ENCODE measurements at regions of chr6 and their contacts with region 1.

Region 1: GRCh38 chr6:158220786-158221442 is 52.8 kb downstream of the GTF2H5 start:
- H3K4me3 Mint-ChIP-seq: no peak overlapping the region
- H3K27ac Mint-ChIP-seq: no peak overlapping the region
- H3K4me1 Mint-ChIP-seq: peaks cover 15% of the 10 kb centered on the region
- H3K27me3 Mint-ChIP-seq: peaks cover 5% of the 10 kb centered on the region

Region 2: DNA sequence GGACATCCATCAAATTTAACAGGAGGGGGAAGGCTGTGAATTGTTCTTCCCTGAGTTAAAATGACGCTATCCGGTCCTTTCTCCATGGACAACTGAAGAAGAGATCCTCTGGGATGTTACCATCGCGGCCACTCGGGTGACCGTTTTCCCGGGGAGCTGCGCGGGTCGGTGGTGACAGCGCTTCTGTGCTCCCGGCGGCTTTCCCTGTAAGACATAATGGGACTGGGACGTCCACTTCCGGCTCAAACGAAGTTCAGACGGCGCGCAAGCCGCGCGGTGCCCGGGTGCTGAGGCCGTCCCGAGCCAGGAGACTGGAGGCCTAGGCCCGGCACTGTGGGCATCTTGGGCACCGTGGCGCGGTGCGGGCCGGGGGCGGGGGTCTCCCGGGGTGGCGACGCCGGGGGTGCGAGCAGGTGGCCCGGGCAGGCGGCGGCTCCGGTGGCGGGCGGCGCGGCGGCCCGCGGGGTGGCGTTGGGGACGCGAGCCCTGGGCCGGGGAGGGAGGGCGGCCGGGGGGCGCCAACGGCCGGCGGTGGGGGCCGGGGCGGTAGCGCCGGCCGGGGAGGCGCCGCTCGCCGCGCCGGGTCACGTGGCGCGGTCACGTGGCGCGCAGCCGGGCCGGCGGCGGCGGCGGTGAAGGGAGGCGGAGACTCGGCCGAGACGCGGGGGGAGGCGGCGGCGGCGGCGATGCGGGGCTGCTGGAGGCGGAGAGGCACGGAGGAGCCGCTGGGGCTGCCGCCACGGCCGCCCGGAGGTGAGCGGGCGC is 10.8 kb after region 1 on chr6:
- intact Hi-C with region 1: no loop called
- H3K4me3 Mint-ChIP-seq: peak overlapping the region; percentile 90
- H3K27ac Mint-ChIP-seq: peak overlapping the region; percentile 91
- H3K4me1 Mint-ChIP-seq: peaks cover 23% of the 10 kb centered on the region
- H3K27me3 Mint-ChIP-seq: peaks cover 15% of the 10 kb centered on the region

Region 3: GRCh38 chr6:158518191-158519127 is 297.5 kb after region 1 on chr6:
- intact Hi-C with region 1: loop called (anchors 1 kb)
- H3K4me3 Mint-ChIP-seq: peak overlapping the region; percentile 51
- H3K27ac Mint-ChIP-seq: no peak overlapping the region
- H3K4me1 Mint-ChIP-seq: peaks cover 11% of the 10 kb centered on the region
- H3K27me3 Mint-ChIP-seq: peaks cover 46% of the 10 kb centered on the region

Measured in dendritic cell treated with granulocyte-macrophage colony-stimulating factor and Interleukin-4, amounts not matched to agents 40 ng/mL and 50 ng/mL, for 4 days (primary cell).